ENCODE measurements at regions of chr17 and their contacts with region 1.

Region 1: GRCh38 chr17:41521574-41522261 is 3.0 kb upstream of the KRT15 start:
- DNase-seq: peak; percentile 87
- H3K4me3 Mint-ChIP-seq: peak overlapping the region; percentile 49
- H3K27ac Mint-ChIP-seq: peak overlapping the region; percentile 88
- H3K4me1 Mint-ChIP-seq: peaks cover 55% of the 10 kb centered on the region
- H3K27me3 Mint-ChIP-seq: no peaks in the 10 kb centered on the region
- CTCF ChIP-seq: no peak

Region 2: GRCh38 chr17:41392278-41392677 is 129.4 kb before region 1 on chr17:
- CTCF ChIA-PET with region 1: no interaction called
- POLR2A ChIA-PET with region 1: no interaction called
- intact Hi-C with region 1: no loop called
- DNase-seq: no peak
- H3K4me3 Mint-ChIP-seq: no peak overlapping the region
- H3K27ac Mint-ChIP-seq: no peak overlapping the region
- H3K4me1 Mint-ChIP-seq: no peaks in the 10 kb centered on the region
- H3K27me3 Mint-ChIP-seq: no peaks in the 10 kb centered on the region
- CTCF ChIP-seq: no peak

Region 3: GRCh38 chr17:41492771-41493170 is 28.9 kb before region 1 on chr17:
- CTCF ChIA-PET with region 1: no interaction called
- POLR2A ChIA-PET with region 1: no interaction called
- intact Hi-C with region 1: no loop called
- DNase-seq: peak; percentile 49
- H3K4me3 Mint-ChIP-seq: no peak overlapping the region
- H3K27ac Mint-ChIP-seq: no peak overlapping the region
- H3K4me1 Mint-ChIP-seq: peaks cover 6% of the 10 kb centered on the region
- H3K27me3 Mint-ChIP-seq: no peaks in the 10 kb centered on the region
- CTCF ChIP-seq: no peak

Region 4: DNA sequence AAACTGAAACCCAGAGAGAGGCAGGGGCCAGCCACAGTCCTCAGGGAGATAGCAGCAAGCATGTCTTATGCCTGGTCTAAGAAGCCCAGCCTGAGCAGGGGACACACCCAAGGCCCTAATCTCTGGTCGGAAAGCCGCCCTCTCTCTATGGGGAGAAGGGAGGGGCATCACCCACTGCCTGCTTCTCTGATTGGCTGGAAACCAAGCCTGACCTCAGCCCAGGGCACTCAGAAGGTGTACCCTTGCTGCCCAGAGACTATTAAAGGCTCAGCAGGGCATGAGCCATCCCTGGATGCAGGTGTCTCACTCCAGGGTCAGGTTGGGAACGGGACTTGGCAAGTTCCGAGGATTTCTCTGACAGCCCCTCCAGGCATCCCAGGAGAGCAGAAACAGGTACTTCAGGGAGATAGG is 10.6 kb before region 1 on chr17:
- CTCF ChIA-PET with region 1: no interaction called
- POLR2A ChIA-PET with region 1: interaction called, 11 read pairs
- intact Hi-C with region 1: no loop called
- DNase-seq: no peak
- H3K4me3 Mint-ChIP-seq: no peak overlapping the region
- H3K27ac Mint-ChIP-seq: no peak overlapping the region
- H3K4me1 Mint-ChIP-seq: peaks cover 13% of the 10 kb centered on the region
- H3K27me3 Mint-ChIP-seq: no peaks in the 10 kb centered on the region
- CTCF ChIP-seq: no peak

Region 5: DNA sequence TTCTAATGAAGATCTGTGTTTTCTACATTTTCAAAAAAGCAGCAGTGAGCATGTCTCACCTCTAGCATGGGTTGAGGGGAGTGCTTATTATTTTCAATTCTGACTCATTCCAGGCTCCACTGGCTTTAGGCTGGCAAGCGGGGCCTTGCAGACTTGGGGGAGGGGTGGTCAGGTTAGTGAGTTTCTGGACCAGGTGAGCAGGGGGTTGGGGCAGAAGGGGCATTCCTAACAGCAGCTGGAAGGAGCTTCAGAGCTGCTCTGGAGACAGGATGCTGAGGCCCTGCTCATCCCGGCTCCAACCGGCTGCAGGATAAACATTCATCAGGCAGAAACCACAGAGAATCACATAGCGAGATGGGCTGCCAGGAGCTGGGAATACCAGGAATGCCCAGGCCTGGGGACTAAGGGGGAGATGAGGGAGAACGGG is 16.9 kb after region 1 on chr17:
- CTCF ChIA-PET with region 1: interaction called, 3 read pairs
- POLR2A ChIA-PET with region 1: interaction called, 22 read pairs
- intact Hi-C with region 1: no loop called
- DNase-seq: peak; percentile 65
- H3K4me3 Mint-ChIP-seq: no peak overlapping the region
- H3K27ac Mint-ChIP-seq: no peak overlapping the region
- H3K4me1 Mint-ChIP-seq: peaks cover 34% of the 10 kb centered on the region
- H3K27me3 Mint-ChIP-seq: no peaks in the 10 kb centered on the region
- CTCF ChIP-seq: no peak

Region 6: DNA sequence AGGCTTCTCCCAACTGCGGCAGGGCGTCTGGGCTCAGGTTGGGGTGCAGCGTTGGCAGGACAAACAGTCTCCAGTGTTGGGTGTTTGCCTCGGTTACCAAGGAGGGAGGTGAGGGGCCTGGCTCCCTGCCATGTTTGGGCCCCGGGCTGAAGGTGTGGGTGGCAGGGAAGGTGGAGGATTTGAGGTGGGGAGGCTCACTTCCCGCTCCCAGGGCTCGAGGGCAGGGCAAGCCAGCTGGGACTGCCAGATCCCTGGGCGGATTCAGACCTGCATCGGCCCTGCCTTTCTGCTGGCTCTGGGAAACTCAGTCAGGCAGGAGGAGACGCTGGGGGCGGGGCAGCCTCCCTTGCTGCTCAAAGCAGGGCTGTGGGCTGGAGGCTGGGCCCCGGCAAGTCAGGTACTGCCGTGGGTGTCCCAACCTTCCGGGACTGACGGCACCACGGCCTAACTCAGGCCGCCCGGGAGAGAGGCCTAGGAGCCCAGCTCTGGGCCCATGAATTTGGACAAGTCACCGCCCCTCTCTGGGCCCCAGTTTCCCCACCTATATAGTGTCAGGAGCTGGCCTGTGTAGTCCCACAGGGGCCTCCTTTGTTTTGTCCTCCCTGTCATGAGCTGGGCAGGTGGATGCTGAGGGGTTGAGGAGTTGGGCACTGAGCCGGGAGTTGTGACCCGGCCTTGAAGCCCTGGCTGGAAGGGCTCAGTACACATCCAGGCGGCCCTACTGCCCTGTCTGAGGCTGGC is 134.1 kb after region 1 on chr17:
- CTCF ChIA-PET with region 1: interaction called, 3 read pairs
- POLR2A ChIA-PET with region 1: interaction called, 49 read pairs
- intact Hi-C with region 1: no loop called
- DNase-seq: peak; percentile 98
- H3K4me3 Mint-ChIP-seq: peak overlapping the region; percentile 69
- H3K27ac Mint-ChIP-seq: no peak overlapping the region
- H3K4me1 Mint-ChIP-seq: peaks cover 68% of the 10 kb centered on the region
- H3K27me3 Mint-ChIP-seq: no peaks in the 10 kb centered on the region
- CTCF ChIP-seq: no peak

Region 7: GRCh38 chr17:42221937-42222745 is 700.4 kb after region 1 on chr17:
- CTCF ChIA-PET with region 1: no interaction called
- POLR2A ChIA-PET with region 1: no interaction called
- intact Hi-C with region 1: no loop called
- DNase-seq: peak; percentile 56
- H3K4me3 Mint-ChIP-seq: no peak overlapping the region
- H3K27ac Mint-ChIP-seq: no peak overlapping the region
- H3K4me1 Mint-ChIP-seq: no peaks in the 10 kb centered on the region
- H3K27me3 Mint-ChIP-seq: no peaks in the 10 kb centered on the region
- CTCF ChIP-seq: peak; percentile 54